HepG2 (cell line): ENCODE measurements at regions of chr17 and their contacts with region 1.

Region 1: DNA sequence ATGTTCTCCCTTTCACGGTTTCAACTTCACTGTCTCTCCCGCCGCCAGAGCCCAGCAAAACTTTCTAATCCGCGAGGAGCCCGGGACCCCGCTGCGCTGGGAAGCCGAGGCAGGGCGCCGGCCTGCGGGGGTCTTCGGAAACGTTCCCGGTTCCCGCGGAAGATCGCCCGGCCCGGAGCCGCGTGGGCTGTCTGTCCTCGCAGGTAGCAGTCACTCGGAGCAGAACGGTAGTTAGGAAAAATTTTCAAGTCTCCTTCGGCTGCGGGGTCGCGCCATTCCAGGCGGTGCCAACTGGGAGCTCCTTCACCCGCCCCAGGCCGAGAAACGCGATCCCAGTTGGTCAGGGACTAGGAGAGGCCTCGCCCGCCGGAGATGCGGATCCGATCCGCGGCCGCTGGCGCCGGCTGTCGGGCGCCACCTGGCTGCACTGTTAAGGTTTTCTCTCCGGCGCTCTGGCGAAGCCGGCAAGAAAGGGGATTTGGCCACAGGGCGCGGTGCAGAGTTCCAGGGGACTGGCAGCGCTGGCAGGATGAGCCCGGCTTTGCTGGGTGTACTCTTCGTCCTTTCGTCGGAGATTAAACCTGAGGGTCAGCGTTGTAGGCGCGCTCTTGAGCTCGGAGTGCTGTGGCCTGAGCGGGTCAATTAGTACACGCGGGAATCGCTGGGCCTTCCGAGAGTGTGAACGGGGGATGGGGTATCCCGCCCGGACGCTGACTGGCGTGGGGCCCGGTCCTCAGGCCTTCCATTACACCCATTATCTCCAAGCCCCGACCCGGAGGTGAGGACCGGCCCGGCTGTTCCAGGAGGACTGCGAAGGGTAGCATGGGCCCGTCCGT is 135.4 kb downstream of the KCNJ12 start:
- DNase-seq: peak; percentile 38
- ATAC-seq: peak; percentile 96
- H3K4me3 ChIP-seq: peak overlapping the region in 2 of 3 experiments; percentile 32 to 55; a peak in 2 of 6 replicates
- H3K27ac ChIP-seq: no peak overlapping the region
- H3K4me1 ChIP-seq: 0 out of 2 replicates have a peak, but pooled peaks cover 6% of the 10 kb centered on the region
- H3K27me3 ChIP-seq: peaks cover 2 to 25% of the 10 kb centered on the region in 2 experiments
- CTCF ChIP-seq: peak; percentile 82
- EP300 ChIP-seq: no peak
- POLR2A ChIP-seq: no peak
- RAD21 ChIP-seq: peak; percentile 69; the same call in 1 of the 2 replicates

Region 2: GRCh38 chr17:21119247-21119918 is 392.2 kb before region 1 on chr17:
- CTCF ChIA-PET with region 1: no interaction called
- POLR2A ChIA-PET with region 1: no interaction called
- in situ Hi-C with region 1: loop called (anchors 10 kb)
- intact Hi-C with region 1: loop called (anchors 5 kb)
- DNase-seq: peak; percentile 53
- ATAC-seq: peak; percentile 69
- H3K4me3 ChIP-seq: no peak overlapping the region
- H3K27ac ChIP-seq: no peak overlapping the region
- H3K4me1 ChIP-seq: peaks cover 24% of the 10 kb centered on the region
- H3K27me3 ChIP-seq: no peaks in the 10 kb centered on the region; a peak in 1 of 5 replicates
- CTCF ChIP-seq: peak; percentile 84
- EP300 ChIP-seq: no peak
- POLR2A ChIP-seq: no peak
- RAD21 ChIP-seq: peak; percentile 44; the same call in 1 of the 2 replicates

Region 3: DNA sequence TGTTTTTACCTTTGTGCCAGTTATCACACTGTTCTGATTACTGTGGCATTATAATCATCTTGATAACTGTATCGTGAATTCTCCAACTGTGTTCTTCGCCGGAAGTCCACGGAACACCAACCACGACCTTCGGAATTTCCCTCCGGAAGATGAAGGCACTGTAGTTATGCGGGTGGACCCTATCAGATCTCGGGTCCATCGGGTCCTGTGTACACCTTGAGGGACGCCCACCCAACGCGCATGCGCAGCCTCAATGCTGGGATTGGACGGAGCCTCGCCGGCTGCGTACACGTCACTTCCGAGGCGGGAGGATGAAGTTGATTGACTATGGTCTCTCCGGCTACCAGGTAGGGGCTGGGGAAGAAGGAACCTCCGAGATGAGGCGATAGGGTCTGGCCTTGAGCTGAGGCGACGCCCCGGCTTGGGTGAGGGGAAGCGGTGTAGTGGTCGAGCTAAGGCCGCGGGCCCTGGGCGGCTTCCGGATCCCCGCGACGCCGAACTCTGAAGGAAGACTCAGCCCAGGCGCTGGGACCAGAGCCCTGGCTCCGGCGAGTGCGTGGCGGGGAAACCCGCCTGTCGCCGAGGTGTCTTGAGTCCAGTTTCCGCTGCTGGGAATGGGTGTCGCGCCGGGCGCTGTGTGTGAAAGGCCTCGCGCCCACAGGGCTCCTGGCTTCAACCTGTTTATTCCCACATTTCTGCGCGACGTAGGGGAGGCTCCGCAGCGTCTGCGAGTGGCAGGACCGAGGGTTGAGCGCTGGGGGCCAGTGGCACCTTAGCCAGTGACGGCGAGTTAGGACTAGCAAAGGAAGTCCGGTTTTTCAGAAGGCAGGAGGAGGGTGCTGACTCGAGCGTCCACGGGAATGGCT is 384.7 kb before region 1 on chr17 and contains the start of gene DHRS7B:
- CTCF ChIA-PET with region 1: interaction called, 4 read pairs
- POLR2A ChIA-PET with region 1: no interaction called
- in situ Hi-C with region 1: loop called (anchors 10 kb)
- intact Hi-C with region 1: no loop called
- DNase-seq: peak; percentile 95
- ATAC-seq: peak; percentile 93
- H3K4me3 ChIP-seq: peak within 1 kb of the TSS; percentile 69 to 92 (median 71)
- H3K27ac ChIP-seq: peak within 1 kb of the TSS; percentile 85
- H3K4me1 ChIP-seq: peaks cover 18% of the 10 kb centered on the region
- H3K27me3 ChIP-seq: no peaks in the 10 kb centered on the region
- CTCF ChIP-seq: 0 out of 2 replicates have a peak, but pooled peaks have one; percentile 24
- EP300 ChIP-seq: no peak
- POLR2A ChIP-seq: peak; percentile 73 to 76
- RAD21 ChIP-seq: 0 out of 2 replicates have a peak, but pooled peaks have one; percentile 22
- total RNA-seq, gene DHRS7B: 24.3 and 35.8 TPM in 2 replicates

Region 4: DNA sequence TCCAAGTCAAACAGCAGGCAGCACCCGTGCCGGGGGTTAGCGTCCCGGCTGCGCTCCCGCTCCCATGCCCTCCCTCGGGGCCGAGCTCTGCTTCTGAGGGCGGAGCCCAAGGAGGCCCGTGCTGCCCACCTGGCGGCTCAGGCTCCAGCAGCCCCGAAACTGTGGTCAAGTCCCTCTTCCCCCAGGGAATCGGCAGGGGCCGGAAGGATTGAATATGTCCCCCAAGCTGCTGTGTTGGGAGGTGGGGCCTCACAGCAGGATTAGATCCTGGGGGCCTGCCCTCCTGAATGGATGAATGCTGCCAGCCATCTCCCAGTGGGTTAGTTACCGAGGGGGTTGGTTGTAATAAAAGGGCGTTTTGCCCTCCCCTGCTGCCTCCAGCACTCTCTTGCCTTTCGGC is 193.1 kb before region 1 on chr17:
- CTCF ChIA-PET with region 1: no interaction called
- POLR2A ChIA-PET with region 1: no interaction called
- in situ Hi-C with region 1: no loop called
- intact Hi-C with region 1: loop called (anchors 10 kb)
- DNase-seq: no peak
- ATAC-seq: no peak
- H3K4me3 ChIP-seq: no peak overlapping the region
- H3K27ac ChIP-seq: no peak overlapping the region
- H3K4me1 ChIP-seq: peaks cover 22% of the 10 kb centered on the region
- H3K27me3 ChIP-seq: peaks cover 0 to 1% of the 10 kb centered on the region in 2 experiments; a peak in 1 of 5 replicates
- CTCF ChIP-seq: no peak
- EP300 ChIP-seq: no peak
- POLR2A ChIP-seq: no peak
- RAD21 ChIP-seq: no peak

Region 5: GRCh38 chr17:21457051-21458026 is 54.2 kb before region 1 on chr17:
- CTCF ChIA-PET with region 1: interaction called, 11 read pairs
- POLR2A ChIA-PET with region 1: interaction called, 4 read pairs
- in situ Hi-C with region 1: loop called (anchors 5 kb)
- intact Hi-C with region 1: loop called (anchors 1 kb)
- DNase-seq: peak; percentile 67
- ATAC-seq: peak; percentile 91
- H3K4me3 ChIP-seq: no peak overlapping the region
- H3K27ac ChIP-seq: no peak overlapping the region
- H3K4me1 ChIP-seq: peaks cover 5% of the 10 kb centered on the region; the same call in 1 of the 2 replicates
- H3K27me3 ChIP-seq: peaks cover 1 to 18% of the 10 kb centered on the region in 2 experiments; a peak in 3 of 5 replicates
- CTCF ChIP-seq: peak; percentile 88
- EP300 ChIP-seq: no peak
- POLR2A ChIP-seq: no peak
- RAD21 ChIP-seq: peak; percentile 63

Region 6: DNA sequence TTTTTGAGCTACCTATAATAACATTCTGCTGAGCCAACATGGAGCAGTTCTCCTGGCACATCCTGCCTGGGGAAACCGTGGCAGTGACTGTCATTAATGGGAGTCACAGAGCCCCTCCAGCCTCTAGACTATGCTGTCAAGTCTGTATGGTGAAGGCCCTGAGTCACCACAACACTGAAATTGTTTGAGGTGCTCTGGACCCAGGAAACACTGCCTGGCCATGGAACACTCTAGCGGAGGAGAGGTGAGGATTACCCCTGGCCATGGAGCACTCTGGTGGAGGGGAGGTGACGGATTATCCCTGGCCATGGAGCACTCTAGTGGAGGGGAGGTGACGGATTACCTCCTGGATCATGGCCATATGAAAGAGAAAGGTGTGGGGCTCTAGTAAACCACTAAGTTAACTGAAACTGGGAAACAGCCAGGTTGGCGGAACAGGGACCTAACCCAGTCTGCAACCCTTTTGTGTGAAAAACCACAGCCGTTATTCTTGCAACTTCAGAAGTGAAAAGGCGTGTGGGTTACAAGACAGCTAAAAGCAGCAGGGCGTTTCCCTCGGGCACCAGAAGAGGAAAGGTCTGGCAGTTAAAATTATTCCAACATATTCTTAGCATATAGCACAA is 21.3 kb after region 1 on chr17:
- CTCF ChIA-PET with region 1: no interaction called
- POLR2A ChIA-PET with region 1: no interaction called
- in situ Hi-C with region 1: no loop called
- intact Hi-C with region 1: no loop called
- DNase-seq: no peak
- ATAC-seq: no peak
- H3K4me3 ChIP-seq: no peak overlapping the region
- H3K27ac ChIP-seq: no peak overlapping the region
- H3K4me1 ChIP-seq: no peaks in the 10 kb centered on the region
- H3K27me3 ChIP-seq: no peaks in the 10 kb centered on the region
- CTCF ChIP-seq: no peak
- EP300 ChIP-seq: no peak
- POLR2A ChIP-seq: no peak
- RAD21 ChIP-seq: no peak